Posterior vena cava (tissue), 2 donors: ENCODE measurements at regions of chr5 and their contacts with region 1.

Region 1: GRCh38 chr5:59799668-59800346 is 93.7 kb downstream of the PDE4D start:
- DNase-seq: no peak

Region 2: GRCh38 chr5:59193616-59194319 is 606.0 kb before region 1 on chr5:
- intact Hi-C with region 1: loop called in 1 of 2 experiments (anchors 10 kb)
- DNase-seq: no peak

Region 3: GRCh38 chr5:59390074-59390659 is 409.6 kb before region 1 on chr5:
- intact Hi-C with region 1: loop called in 1 of 2 experiments (anchors 5 kb)
- DNase-seq: no peak

Region 4: DNA sequence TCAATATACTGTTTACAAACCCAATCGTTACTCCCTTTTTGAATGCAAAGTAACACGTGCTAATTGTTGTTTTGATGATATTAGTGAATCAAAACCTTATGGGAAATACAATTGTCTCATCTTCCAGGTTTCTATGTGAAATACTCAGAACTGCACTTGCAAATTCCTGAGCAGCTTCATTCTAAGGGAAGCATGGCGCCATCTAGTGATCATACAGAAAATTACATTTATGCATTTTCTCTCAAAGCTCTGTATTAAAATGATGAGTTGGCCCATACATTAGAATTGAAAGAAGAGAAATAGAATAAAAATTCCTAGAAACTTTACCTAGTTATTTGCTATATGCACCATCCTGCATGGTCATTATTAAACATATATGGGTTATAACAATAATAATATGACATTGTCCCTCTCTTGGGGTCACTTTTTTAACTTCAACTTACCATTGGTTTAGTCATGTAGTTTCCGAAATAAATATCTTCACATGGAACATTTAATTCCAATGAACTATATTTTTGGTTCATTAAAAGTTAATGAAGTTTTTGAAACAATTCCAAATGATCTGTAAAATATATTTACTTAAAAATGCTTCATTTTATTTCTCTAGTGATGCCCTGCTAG is 126.3 kb before region 1 on chr5:
- intact Hi-C with region 1: loop called in 1 of 2 experiments (anchors 10 kb)
- DNase-seq: no peak

Region 5: GRCh38 chr5:59819806-59820205 is 20.0 kb after region 1 on chr5:
- intact Hi-C with region 1: loop called in 1 of 2 experiments (anchors 1 kb)
- DNase-seq: no peak